PC-3 (cell line): ENCODE measurements at regions of chr2 and their contacts with region 1.

Region 1: DNA sequence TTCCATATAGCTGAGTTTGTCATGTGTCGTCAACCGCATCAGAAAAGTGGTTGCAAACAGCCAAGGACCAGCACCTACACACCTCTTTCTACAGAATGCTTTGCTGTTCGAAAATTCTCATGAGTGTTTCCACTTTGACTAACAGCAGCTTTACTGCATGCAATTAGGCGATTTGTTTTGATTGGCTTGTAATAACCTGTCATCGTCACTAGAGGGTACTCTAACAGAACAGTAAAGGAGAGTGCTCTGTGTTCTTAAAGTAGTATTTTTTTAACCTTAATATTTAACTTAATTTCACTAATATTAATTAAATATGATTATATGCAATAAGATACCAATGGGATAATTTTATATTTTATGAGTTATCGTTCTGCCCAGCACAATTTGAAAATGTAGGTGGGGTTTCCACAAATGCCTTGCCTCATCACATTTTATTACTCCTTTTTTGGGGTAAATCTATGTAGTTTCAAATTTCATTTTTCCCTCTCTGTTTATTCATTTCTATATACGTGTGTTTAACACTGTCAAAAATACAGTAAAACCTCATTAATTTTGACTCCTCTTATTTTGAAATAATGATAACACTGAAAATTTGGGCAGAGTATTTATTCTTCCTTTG is 502.2 kb downstream of the NRXN1 start:
- DNase-seq: peak; percentile 70
- ATAC-seq: peak; percentile 77
- H3K4me3 ChIP-seq: no peak overlapping the region
- H3K27ac ChIP-seq: no peak overlapping the region
- H3K4me1 ChIP-seq: no peaks in the 10 kb centered on the region
- H3K27me3 ChIP-seq: peaks cover 29% of the 10 kb centered on the region
- CTCF ChIP-seq: peak; percentile 62

Region 2: DNA sequence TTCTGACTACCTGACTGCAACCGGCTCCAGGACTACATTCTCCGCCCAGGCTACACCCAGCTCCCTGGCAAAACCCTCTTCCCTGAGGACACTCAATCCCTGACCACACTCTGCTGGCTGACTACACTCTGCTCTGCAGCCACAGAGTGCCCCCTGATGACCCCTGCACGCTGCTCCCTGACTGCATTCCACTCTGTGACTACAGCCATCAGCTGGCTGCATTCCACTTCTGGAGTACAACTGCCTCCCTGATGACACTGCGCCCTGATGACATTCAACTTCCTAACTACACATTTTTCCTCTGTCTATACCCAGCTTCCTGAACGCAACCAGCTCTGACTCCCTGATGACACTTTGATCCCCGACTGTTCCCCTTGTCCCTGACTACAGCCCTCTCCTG is 573.5 kb after region 1 on chr2:
- CTCF ChIA-PET with region 1: no interaction called
- POLR2A ChIA-PET with region 1: no interaction called
- intact Hi-C with region 1: loop called (anchors 10 kb)
- DNase-seq: peak; percentile 75
- ATAC-seq: peak; percentile 90
- H3K4me3 ChIP-seq: no peak overlapping the region
- H3K27ac ChIP-seq: no peak overlapping the region
- H3K4me1 ChIP-seq: 0 out of 2 replicates have a peak, but pooled peaks cover 6% of the 10 kb centered on the region
- H3K27me3 ChIP-seq: no peaks in the 10 kb centered on the region
- CTCF ChIP-seq: no peak